Heart left ventricle (tissue), 16 donors: ENCODE measurements at regions of chr10 and their contacts with region 1.

Region 1: DNA sequence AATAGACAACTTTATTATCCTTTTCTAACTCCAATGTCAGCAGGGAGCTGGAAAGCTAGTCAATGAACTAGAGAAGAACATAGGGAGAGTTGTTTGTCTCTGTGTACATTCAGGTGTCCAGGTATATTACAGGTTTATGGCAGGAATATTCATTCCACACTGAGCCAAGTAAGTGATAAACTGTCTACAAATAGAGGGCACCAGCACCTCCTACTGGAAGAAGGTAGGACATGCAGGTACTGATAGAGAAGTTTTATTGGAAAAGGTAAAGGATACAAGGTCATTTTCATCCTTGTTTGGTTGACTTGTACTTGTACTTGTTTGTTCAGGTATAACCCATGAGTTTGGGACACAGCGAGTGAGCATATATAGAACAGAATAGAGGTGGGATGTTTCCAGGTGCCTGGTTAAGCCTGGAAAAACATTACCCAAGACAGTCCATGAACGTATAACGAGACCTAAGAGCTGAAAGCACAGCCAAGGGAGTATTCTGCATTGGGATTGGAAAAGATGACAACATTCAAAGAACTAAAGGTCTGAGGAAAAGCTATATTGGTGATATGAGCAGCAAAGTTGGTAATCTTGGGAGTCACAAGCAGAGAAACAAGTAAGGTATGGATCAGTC is 61.4 kb upstream of the PPP1R3C start:
- DNase-seq: no peak
- ATAC-seq: no peak
- H3K4me3 ChIP-seq: no peak overlapping the region
- H3K27ac ChIP-seq: no peak overlapping the region
- H3K4me1 ChIP-seq: peaks cover 0 to 8% (median 1%) of the 10 kb centered on the region in 12 donors
- H3K27me3 ChIP-seq: peaks cover 0 to 2% (median 0%) of the 10 kb centered on the region in 9 donors
- CTCF ChIP-seq: peak; percentile 40 to 70 (median 57)
- POLR2A ChIP-seq: no peak

Region 2: GRCh38 chr10:91493313-91493712 is 201.0 kb before region 1 on chr10:
- intact Hi-C with region 1: loop called in 1 of 10 experiments (anchors 5 kb)
- DNase-seq: no peak
- ATAC-seq: no peak
- H3K4me3 ChIP-seq: no peak overlapping the region
- H3K27ac ChIP-seq: no peak overlapping the region
- H3K4me1 ChIP-seq: peaks cover 0 to 3% (median 0%) of the 10 kb centered on the region in 12 donors
- H3K27me3 ChIP-seq: no peaks in the 10 kb centered on the region
- CTCF ChIP-seq: peak; percentile 26 to 71 (median 58)
- POLR2A ChIP-seq: no peak

Region 3: DNA sequence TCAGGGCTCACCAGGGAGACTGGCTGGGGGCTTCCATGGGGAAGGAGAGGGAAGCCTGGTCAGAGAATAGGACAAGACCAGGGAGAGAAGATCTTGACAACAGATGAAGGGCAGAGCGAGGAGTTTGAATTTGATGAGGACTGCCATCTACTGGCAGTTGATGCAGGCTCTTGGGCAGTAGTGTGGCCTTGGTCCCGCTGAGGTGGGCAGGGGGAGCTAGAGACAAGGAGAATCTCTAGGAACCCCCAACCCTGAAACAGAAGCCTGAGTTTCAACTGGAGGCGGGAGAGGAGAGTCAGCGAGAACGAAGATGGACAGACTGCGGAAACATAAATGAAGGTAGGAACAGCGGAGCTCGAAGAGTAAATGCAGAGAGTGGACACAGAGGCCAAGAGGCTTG is 142.4 kb before region 1 on chr10:
- intact Hi-C with region 1: loop called in 2 of 10 experiments (anchors 5 kb)
- DNase-seq: peak in 4 of 5 donors; percentile 49 to 66 (median 54)
- ATAC-seq: peak; percentile 72 to 87 (median 81)
- H3K4me3 ChIP-seq: peak overlapping the region in 8 of 12 donors; percentile 21 to 49 (median 33)
- H3K27ac ChIP-seq: peak overlapping the region in 6 of 12 donors; percentile 18 to 73 (median 44)
- H3K4me1 ChIP-seq: peaks cover 0 to 21% (median 4%) of the 10 kb centered on the region in 12 donors
- H3K27me3 ChIP-seq: no peaks in the 10 kb centered on the region
- CTCF ChIP-seq: peak; percentile 39 to 86 (median 65)
- POLR2A ChIP-seq: no peak

Region 4: DNA sequence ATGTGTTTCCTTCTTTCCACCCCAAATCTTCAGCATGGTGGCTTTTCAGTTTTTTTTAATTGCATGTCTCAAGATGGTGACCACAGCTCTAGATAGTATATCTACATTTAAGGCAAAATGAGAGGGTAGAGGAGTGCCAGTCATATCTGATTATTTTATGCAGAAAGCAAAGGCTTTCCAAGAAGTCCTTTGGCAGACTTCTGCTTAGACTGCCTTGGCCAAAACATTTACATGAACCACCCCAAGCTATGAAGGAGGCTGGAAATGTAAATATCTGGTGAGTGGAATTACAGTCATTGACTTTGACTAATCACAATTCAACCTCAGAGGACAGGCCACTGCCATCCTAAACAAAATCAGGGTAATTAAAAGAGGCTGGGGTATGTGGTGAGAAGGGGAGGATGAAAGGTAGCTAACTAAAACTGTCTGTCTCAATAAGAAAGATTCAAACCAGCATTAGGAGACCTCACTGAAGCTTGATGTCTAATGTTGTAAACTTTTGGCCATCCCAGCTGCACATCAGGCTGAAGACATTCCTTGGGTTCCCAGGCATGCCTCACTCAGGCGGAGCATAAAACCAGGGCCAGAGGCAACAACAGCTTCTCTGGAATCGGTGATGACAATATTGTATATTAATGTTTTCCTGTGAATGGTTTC is 114.8 kb before region 1 on chr10:
- intact Hi-C with region 1: no loop called
- DNase-seq: no peak
- ATAC-seq: no peak
- H3K4me3 ChIP-seq: no peak overlapping the region
- H3K27ac ChIP-seq: peak overlapping the region in 3 of 12 donors; percentile 13 to 44 (median 19)
- H3K4me1 ChIP-seq: peaks cover 0 to 28% (median 12%) of the 10 kb centered on the region in 12 donors
- H3K27me3 ChIP-seq: no peaks in the 10 kb centered on the region
- CTCF ChIP-seq: no peak
- POLR2A ChIP-seq: no peak

Region 5: DNA sequence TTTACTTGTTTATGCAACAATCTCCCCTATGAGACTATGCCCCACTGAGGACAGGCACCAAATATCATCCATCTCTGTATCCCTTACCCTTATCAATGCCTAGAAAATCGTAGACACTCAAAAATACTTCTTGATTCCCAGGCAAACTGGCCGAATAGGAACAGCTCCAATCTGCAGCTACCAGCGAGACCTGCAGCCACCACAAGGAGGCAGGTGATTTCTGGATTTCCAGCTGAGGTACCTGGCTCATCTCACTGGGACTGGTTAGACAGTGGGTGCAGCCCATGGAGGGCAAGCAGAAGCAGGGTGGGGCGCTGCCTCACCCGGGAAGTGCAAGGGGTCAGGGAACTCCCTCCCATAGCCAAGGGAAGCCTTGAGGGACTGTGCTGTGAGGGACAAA is 50.6 kb before region 1 on chr10:
- intact Hi-C with region 1: loop called in 3 of 10 experiments (anchors 5 kb)
- DNase-seq: no peak
- ATAC-seq: no peak
- H3K4me3 ChIP-seq: no peak overlapping the region
- H3K27ac ChIP-seq: no peak overlapping the region
- H3K4me1 ChIP-seq: no peaks in the 10 kb centered on the region
- H3K27me3 ChIP-seq: no peaks in the 10 kb centered on the region
- CTCF ChIP-seq: peak in 4 of 12 donors; percentile 11 to 25 (median 18)
- POLR2A ChIP-seq: no peak

Region 6: DNA sequence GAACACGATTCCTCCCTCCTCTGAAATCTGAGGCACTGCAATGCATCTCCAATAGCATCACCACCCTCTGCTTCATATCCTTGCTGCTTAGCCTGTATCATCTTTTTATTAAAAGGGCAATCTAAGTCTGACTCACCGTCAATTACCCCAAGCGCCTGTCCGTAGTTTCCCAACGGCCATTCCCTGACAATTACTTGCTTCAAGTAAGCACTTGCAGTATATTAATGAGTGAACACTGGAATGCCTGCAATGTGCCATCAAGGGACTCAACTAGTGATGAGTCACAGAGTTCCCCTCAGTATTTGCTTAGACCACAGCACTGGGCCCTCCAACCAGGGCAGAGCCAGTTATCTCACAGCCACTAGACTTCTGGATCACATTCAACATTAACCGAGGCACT is 41.9 kb before region 1 on chr10:
- intact Hi-C with region 1: loop called in 1 of 10 experiments (anchors 5 kb)
- DNase-seq: peak in 1 of 5 donors; percentile 53
- ATAC-seq: peak; percentile 80 to 95 (median 92)
- H3K4me3 ChIP-seq: no peak overlapping the region
- H3K27ac ChIP-seq: no peak overlapping the region
- H3K4me1 ChIP-seq: peaks cover 0 to 12% (median 0%) of the 10 kb centered on the region in 12 donors
- H3K27me3 ChIP-seq: no peaks in the 10 kb centered on the region
- CTCF ChIP-seq: no peak
- POLR2A ChIP-seq: no peak

Region 7: GRCh38 chr10:91745074-91745832 is 51.0 kb after region 1 on chr10:
- intact Hi-C with region 1: no loop called
- DNase-seq: peak in 2 of 5 donors; percentile 28
- ATAC-seq: peak in 3 of 4 donors; percentile 56 to 80 (median 65)
- H3K4me3 ChIP-seq: no peak overlapping the region
- H3K27ac ChIP-seq: no peak overlapping the region
- H3K4me1 ChIP-seq: peaks cover 0 to 5% (median 0%) of the 10 kb centered on the region in 12 donors
- H3K27me3 ChIP-seq: peaks cover 0 to 14% (median 0%) of the 10 kb centered on the region in 9 donors
- CTCF ChIP-seq: peak in 5 of 12 donors; percentile 16 to 42 (median 26)
- POLR2A ChIP-seq: no peak

Region 8: DNA sequence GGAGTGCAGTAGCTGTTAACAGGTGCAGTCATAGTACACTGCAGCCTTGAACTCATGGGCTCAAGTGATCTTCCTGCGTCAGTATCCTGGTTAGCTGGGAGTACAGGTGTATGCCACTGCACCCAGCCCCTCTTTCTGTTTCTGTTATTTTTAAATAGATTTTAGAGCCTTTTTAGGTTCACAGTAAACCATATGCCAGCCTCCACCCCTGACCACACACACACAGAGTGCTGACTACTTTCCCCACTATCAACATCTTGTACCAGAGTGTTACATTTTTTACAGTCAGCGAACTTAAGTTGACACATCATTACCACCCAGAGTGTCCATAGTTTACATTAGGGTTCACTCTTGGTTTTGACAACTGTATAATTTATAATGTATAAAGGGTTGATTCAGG is 628.8 kb after region 1 on chr10:
- intact Hi-C with region 1: no loop called
- DNase-seq: no peak
- ATAC-seq: no peak
- H3K4me3 ChIP-seq: no peak overlapping the region
- H3K27ac ChIP-seq: no peak overlapping the region
- H3K4me1 ChIP-seq: peaks cover 0 to 16% (median 7%) of the 10 kb centered on the region in 12 donors
- H3K27me3 ChIP-seq: no peaks in the 10 kb centered on the region
- CTCF ChIP-seq: no peak
- POLR2A ChIP-seq: no peak

Region 9: GRCh38 chr10:92993699-92994272 is 1299.5 kb after region 1 on chr10:
- intact Hi-C with region 1: no loop called
- DNase-seq: no peak
- ATAC-seq: no peak
- H3K4me3 ChIP-seq: no peak overlapping the region
- H3K27ac ChIP-seq: no peak overlapping the region
- H3K4me1 ChIP-seq: peaks cover 0 to 13% (median 3%) of the 10 kb centered on the region in 12 donors
- H3K27me3 ChIP-seq: no peaks in the 10 kb centered on the region
- CTCF ChIP-seq: no peak
- POLR2A ChIP-seq: no peak